ENCODE measurements at regions of chr20 and their contacts with region 1.

Region 1: DNA sequence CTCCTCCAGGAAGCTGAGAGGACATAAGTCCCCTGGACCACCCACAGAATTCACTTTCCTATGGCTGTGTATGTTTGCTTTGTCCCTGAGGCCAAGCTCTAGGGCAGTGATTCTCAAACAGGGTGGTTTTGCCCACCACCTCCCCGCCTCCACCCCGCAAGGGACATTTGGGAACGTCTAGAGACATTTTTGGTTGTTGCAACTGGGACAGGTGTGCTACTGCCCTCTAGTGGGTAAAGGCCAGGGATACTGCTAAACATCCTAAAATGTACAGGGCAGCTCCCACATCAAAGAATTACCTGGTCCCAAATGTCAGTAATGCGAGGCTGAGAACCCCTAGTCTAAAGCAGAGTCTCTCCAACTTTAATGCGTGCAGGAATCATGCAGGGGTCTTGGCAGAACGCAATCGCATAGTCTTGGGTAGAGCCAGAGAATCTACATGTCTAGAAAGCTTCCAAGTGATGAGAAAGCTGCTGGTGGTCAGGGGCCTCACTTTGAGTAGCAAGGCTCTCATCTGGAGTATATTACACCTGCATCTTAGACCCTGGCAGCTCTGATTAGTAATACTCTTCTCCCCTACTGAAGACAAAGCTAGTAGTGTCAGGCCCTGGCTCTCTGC is 5.1 kb downstream of the KCNS1 start:
- DNase-seq: peak; percentile 69
- ATAC-seq: peak; percentile 84
- H3K4me3 ChIP-seq: no peak overlapping the region
- H3K27ac ChIP-seq: no peak overlapping the region
- H3K4me1 ChIP-seq: peaks cover 4% of the 10 kb centered on the region; the same call in 1 of the 2 replicates
- H3K27me3 ChIP-seq: peaks cover 37% of the 10 kb centered on the region
- CTCF ChIP-seq: peak; percentile 79
- POLR2A ChIP-seq: no peak
- RAD21 ChIP-seq: peak; percentile 79

Region 2: GRCh38 chr20:44747166-44748004 is 348.5 kb before region 1 on chr20:
- CTCF ChIA-PET with region 1: interaction called, 3 read pairs
- POLR2A ChIA-PET with region 1: no interaction called
- dilution Hi-C with region 1: no loop called
- in situ Hi-C with region 1: no loop called
- intact Hi-C with region 1: loop called (anchors 5 kb)
- DNase-seq: peak; percentile 53
- ATAC-seq: peak; percentile 64
- H3K4me3 ChIP-seq: no peak overlapping the region
- H3K27ac ChIP-seq: no peak overlapping the region
- H3K4me1 ChIP-seq: peaks cover 1% of the 10 kb centered on the region; the same call in 1 of the 2 replicates
- H3K27me3 ChIP-seq: peaks cover 82% of the 10 kb centered on the region
- CTCF ChIP-seq: peak; percentile 66
- POLR2A ChIP-seq: no peak
- RAD21 ChIP-seq: peak; percentile 54

Region 3: DNA sequence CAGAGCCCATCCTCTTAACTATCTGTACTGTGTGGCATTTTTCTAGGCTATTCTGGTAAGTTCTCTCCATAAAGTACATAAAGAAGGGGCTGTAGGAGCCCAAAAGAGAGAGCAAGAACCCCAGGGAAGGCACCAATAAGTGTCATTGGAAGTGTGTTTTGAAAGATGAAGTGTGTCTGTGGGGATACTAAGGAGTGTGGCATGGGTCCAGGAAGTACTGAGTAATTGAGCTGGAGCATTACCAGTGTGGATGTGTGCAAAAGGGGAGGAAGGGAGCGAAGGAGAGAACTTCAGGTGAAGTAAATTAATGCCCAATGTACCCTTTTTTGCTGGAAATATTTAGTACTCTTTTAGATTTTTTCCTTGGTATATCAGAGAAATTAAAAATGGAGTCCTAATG is 58.8 kb before region 1 on chr20:
- CTCF ChIA-PET with region 1: interaction called, 15 read pairs
- POLR2A ChIA-PET with region 1: no interaction called
- dilution Hi-C with region 1: no loop called
- in situ Hi-C with region 1: no loop called
- intact Hi-C with region 1: no loop called
- DNase-seq: peak; percentile 63
- ATAC-seq: peak; percentile 16; the same call in 1 of the 2 replicates
- H3K4me3 ChIP-seq: no peak overlapping the region
- H3K27ac ChIP-seq: no peak overlapping the region
- H3K4me1 ChIP-seq: peaks cover 13% of the 10 kb centered on the region; the same call in 1 of the 2 replicates
- H3K27me3 ChIP-seq: no peaks in the 10 kb centered on the region
- CTCF ChIP-seq: no peak
- POLR2A ChIP-seq: no peak
- RAD21 ChIP-seq: no peak

Region 4: GRCh38 chr20:45052698-45053429 is 43.0 kb before region 1 on chr20:
- CTCF ChIA-PET with region 1: interaction called, 10 read pairs
- POLR2A ChIA-PET with region 1: no interaction called
- dilution Hi-C with region 1: no loop called
- in situ Hi-C with region 1: no loop called
- intact Hi-C with region 1: no loop called
- DNase-seq: peak; percentile 81
- ATAC-seq: peak; percentile 92
- H3K4me3 ChIP-seq: no peak overlapping the region
- H3K27ac ChIP-seq: peak overlapping the region; percentile 44; the same call in 1 of the 2 replicates
- H3K4me1 ChIP-seq: peaks cover 14% of the 10 kb centered on the region
- H3K27me3 ChIP-seq: no peaks in the 10 kb centered on the region
- CTCF ChIP-seq: no peak
- POLR2A ChIP-seq: no peak
- RAD21 ChIP-seq: no peak